ENCODE measurements at regions of chr3 and their contacts with region 1.

Region 1: DNA sequence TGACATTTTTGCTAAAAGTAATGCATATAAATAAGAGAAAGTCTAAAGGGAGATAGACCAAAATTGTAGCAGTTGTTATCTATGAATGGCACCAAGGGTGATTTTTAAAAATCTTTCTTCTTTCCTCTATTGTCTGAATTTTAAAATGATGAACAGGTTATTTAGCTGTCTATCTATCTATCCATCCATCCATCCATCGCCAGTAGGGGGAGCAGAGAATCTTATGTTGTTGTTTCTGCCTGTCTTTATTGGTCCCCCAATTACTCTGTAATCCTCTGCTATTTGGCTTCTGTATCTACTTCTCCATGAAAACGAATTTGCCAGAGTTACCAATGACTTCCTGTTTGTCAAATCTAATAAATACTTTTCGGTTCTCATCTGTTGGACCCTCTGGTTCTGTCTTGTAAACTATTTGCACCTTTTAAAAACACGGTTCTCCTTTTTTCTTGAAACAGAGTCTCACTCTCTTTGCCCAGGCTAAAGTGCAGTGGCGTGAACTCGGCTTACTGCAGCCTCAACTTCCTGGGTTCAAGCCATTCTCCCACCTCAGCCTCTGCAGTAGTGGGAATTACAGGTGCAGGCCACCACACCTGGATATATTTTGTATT is 86.0 kb downstream of the ECT2 start:
- DNase-seq: no peak
- ATAC-seq: peak; percentile 71

Region 2: GRCh38 chr3:172973799-172974198 is 137.3 kb after region 1 on chr3:
- intact Hi-C with region 1: loop called (anchors 5 kb)
- DNase-seq: no peak
- ATAC-seq: no peak

Region 3: GRCh38 chr3:173045770-173046382 is 209.4 kb after region 1 on chr3:
- intact Hi-C with region 1: loop called (anchors 10 kb)
- DNase-seq: no peak
- ATAC-seq: peak; percentile 31

Measured in Right ventricle myocardium superior (tissue), 1 donor.